ENCODE measurements at regions of chr16 and their contacts with region 1.

Region 1: GRCh38 chr16:56681939-56682702 is at the start of gene MT1X:
- DNase-seq: peak; percentile 95
- H3K4me3 Mint-ChIP-seq: peak within 1 kb of the TSS; percentile 70
- H3K27ac Mint-ChIP-seq: peak within 1 kb of the TSS; percentile 67
- H3K4me1 Mint-ChIP-seq: peaks cover 26% of the 10 kb centered on the region
- H3K27me3 Mint-ChIP-seq: no peaks in the 10 kb centered on the region
- CTCF ChIP-seq: no peak
- total RNA-seq, gene MT1X: 79.3 and 108 TPM in 2 replicates

Region 2: GRCh38 chr16:56506941-56507340 is 175.2 kb before region 1 on chr16:
- CTCF ChIA-PET with region 1: no interaction called
- POLR2A ChIA-PET with region 1: interaction called, 13 read pairs
- intact Hi-C with region 1: no loop called
- DNase-seq: no peak
- H3K4me3 Mint-ChIP-seq: no peak overlapping the region
- H3K27ac Mint-ChIP-seq: peak overlapping the region; percentile 21
- H3K4me1 Mint-ChIP-seq: no peaks in the 10 kb centered on the region
- H3K27me3 Mint-ChIP-seq: no peaks in the 10 kb centered on the region
- CTCF ChIP-seq: no peak

Region 3: DNA sequence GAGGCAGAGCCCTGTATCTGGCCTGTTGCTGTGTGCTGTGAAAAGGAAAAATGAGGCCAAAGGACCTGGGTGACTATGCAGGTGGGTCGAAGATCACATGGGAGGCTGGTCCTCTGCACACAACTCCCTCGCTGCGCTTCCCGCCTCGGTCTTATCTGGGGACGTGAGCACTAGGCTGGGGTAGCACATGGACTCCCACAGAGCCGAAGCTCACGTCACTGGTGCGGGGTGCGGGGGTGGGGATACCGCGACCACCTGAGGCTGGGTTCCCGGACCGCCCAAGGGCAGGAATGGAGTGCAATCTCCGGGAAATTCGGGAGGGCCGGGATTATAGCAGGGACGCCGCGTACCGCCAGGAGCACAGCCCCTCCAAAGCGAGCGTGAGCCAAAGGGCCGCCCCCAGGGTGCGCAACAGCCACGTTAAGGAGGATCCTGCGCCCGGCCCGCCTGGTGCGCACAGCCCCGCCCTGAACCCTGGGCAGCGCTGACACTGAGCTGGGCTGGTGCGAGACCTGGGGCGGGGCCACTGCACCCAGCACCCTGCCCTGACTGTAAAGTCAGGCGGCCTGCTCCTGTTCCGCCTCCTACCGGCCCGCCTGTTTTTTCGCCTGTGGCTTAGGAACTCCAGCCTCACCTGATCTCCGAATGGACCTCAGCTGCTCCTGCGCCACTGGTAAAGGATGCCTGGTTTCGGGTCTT is 38.9 kb before region 1 on chr16:
- CTCF ChIA-PET with region 1: interaction called, 3 read pairs
- POLR2A ChIA-PET with region 1: interaction called, 21 read pairs
- intact Hi-C with region 1: no loop called
- DNase-seq: peak; percentile 86
- H3K4me3 Mint-ChIP-seq: peak overlapping the region; percentile 25
- H3K27ac Mint-ChIP-seq: no peak overlapping the region
- H3K4me1 Mint-ChIP-seq: peaks cover 3% of the 10 kb centered on the region
- H3K27me3 Mint-ChIP-seq: no peaks in the 10 kb centered on the region
- CTCF ChIP-seq: peak; percentile 62

Region 4: DNA sequence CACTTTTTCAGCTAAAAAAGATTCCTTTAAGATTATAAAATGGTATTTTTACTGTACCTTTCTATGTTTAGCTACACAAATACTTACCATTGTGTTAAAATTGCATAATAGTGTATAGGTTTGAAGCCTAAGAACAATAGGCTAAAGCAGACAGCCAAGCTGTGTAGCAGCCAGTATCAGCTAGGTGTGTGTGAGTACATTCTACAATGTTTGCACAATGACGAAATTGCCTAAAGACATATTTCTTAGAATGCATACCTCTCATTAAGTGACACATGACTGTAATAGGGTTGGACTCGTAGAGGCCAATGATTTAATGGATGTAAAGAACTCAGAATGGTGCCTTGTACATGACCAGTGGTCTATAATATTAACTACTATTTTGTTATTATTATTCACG is 32.3 kb before region 1 on chr16:
- CTCF ChIA-PET with region 1: no interaction called
- POLR2A ChIA-PET with region 1: interaction called, 15 read pairs
- intact Hi-C with region 1: no loop called
- DNase-seq: peak; percentile 90
- H3K4me3 Mint-ChIP-seq: no peak overlapping the region
- H3K27ac Mint-ChIP-seq: no peak overlapping the region
- H3K4me1 Mint-ChIP-seq: peaks cover 10% of the 10 kb centered on the region
- H3K27me3 Mint-ChIP-seq: no peaks in the 10 kb centered on the region
- CTCF ChIP-seq: no peak

Region 5: GRCh38 chr16:56657555-56658326 is 24.4 kb before region 1 on chr16 and contains the start of gene MT1F:
- CTCF ChIA-PET with region 1: interaction called, 6 read pairs
- POLR2A ChIA-PET with region 1: interaction called, 15 read pairs
- intact Hi-C with region 1: no loop called
- DNase-seq: peak; percentile 95
- H3K4me3 Mint-ChIP-seq: peak within 1 kb of the TSS; percentile 77
- H3K27ac Mint-ChIP-seq: no peak within 1 kb of the TSS
- H3K4me1 Mint-ChIP-seq: peaks cover 21% of the 10 kb centered on the region
- H3K27me3 Mint-ChIP-seq: no peaks in the 10 kb centered on the region
- CTCF ChIP-seq: no peak
- total RNA-seq, gene MT1F: 1.7 and 2.4 TPM in 2 replicates

Region 6: DNA sequence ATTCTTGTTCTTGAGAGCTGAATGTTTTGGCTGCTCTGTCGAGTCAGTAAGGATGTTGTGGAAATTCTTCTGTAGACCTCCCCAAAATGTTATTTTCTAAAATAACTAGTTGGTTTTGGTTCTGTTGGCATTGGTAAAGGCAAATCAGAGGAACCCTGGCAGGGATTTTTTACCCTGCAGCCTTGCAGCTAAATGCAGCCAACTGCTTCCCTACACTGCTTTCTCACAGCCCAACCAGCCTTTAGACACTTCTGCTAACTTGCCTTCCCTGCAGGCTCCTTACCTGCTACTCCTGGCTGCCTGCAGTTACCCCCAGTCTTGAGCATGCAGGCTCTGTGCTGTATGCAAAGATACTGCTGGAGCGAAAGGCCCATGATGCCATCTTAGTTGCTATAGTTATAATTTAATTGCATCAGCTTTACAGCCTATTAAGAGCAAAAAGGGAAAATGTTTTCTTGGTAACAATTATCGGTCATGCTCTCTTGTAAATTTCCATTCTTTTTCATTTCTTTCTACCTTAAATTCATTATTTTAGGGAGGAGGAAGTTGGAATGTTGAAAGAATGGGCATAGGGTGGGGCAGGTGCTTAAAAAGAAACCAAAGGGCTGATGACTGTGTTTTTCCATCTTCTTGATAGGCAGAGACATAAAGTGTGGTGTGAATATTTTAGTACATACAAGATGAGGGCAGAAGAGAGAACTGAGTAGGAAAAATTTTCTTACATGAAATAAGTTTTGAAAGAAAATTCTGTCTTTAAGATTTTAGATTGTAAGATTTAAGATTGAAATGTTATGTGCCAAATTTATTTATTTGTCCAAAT is 67.8 kb after region 1 on chr16:
- CTCF ChIA-PET with region 1: no interaction called
- POLR2A ChIA-PET with region 1: no interaction called
- intact Hi-C with region 1: no loop called
- DNase-seq: no peak
- H3K4me3 Mint-ChIP-seq: no peak overlapping the region
- H3K27ac Mint-ChIP-seq: no peak overlapping the region
- H3K4me1 Mint-ChIP-seq: peaks cover 12% of the 10 kb centered on the region
- H3K27me3 Mint-ChIP-seq: no peaks in the 10 kb centered on the region
- CTCF ChIP-seq: no peak

Measured in MCF 10A (cell line).